ENCODE measurements at regions of chr1 and their contacts with region 1.

Region 1: GRCh38 chr1:234149217-234149616 is 224.0 kb upstream of the COA6 start:
- DNase-seq: no peak
- H3K4me3 ChIP-seq: no peak overlapping the region
- H3K27ac ChIP-seq: no peak overlapping the region
- H3K27me3 ChIP-seq: no peaks in the 10 kb centered on the region
- CTCF ChIP-seq: no peak

Region 2: DNA sequence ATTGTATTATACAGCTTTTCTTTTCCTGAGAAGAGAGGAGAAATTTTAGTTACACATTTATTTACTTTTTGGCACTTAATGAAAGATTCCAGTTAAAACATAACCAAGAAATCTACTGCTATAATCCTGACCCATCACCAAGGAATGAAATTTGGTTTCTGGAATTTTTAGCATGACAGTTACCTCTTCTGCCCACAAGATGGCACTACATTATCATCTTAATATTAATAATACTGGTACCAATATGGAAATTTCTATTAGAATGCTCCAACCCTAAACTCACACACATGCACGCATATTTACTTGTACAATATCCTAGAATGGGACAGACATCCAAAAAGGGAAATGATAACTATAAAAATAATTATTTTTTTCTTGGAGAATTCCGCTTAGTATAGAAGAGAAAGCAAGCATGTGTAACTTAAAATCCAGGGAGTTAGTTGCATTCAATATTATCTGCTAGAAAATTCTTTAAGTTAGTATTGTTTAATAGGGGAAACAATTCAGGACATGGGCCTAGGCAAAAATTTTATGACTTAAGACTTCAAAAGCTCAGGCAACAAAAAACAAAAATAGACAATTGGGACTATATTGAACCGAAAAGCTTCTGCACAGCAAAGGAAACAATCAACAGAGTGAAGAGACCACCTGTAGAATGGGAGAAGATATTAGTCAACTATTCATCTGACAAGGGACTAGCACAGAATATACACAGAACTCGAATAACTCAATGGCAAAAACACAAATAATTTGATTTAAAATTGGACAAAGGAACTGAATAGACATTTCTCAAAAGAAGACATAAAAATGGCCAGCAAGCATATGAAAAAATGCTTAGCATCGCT is 784.3 kb before region 1 on chr1:
- CTCF ChIA-PET with region 1: interaction called, 10 read pairs
- POLR2A ChIA-PET with region 1: no interaction called
- DNase-seq: no peak
- H3K4me3 ChIP-seq: no peak overlapping the region
- H3K27ac ChIP-seq: no peak overlapping the region
- H3K27me3 ChIP-seq: no peaks in the 10 kb centered on the region
- CTCF ChIP-seq: peak; percentile 66

Region 3: DNA sequence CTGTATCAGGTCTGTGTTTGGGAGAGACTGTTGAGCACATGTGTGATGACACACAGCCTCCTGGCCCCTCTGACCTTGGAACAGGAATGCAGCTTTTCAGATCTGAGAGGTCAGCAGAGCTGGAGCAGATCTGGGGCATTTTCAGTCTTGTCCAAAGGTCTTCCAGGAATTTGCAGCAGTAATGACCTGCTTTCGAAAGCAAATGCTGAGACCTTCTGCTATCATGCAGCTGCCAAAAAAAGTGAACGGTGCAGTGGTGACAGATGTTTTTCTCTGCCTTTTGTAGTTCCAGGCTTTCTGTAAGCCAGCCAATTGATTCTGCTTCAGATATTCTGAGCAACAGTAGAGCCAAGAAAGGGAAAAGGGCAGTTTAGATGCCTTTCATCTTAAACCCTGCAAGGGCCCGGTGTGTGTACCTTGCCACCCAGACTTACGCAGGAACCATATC is 86.2 kb after region 1 on chr1:
- CTCF ChIA-PET with region 1: no interaction called
- POLR2A ChIA-PET with region 1: no interaction called
- DNase-seq: no peak
- H3K4me3 ChIP-seq: no peak overlapping the region
- H3K27ac ChIP-seq: no peak overlapping the region
- H3K27me3 ChIP-seq: no peaks in the 10 kb centered on the region
- CTCF ChIP-seq: no peak